Endothelial cell of umbilical vein (primary cell): ENCODE measurements at regions of chr4 and their contacts with region 1.

Region 1: GRCh38 chr4:25884031-25884782 is 21.4 kb upstream of the SEL1L3 start:
- DNase-seq: peak; percentile 84
- H3K4me3 ChIP-seq: no peak overlapping the region
- H3K27ac ChIP-seq: peak overlapping the region; percentile 57
- H3K4me1 ChIP-seq: peaks cover 15% of the 10 kb centered on the region
- H3K27me3 ChIP-seq: no peaks in the 10 kb centered on the region
- CTCF ChIP-seq: no peak
- POLR2A ChIP-seq: no peak

Region 2: GRCh38 chr4:25867781-25868294 is 16.4 kb before region 1 on chr4:
- CTCF ChIA-PET with region 1: interaction called, 5 read pairs
- POLR2A ChIA-PET with region 1: no interaction called
- dilution Hi-C with region 1: no loop called
- intact Hi-C with region 1: loop called (anchors 1 kb)
- DNase-seq: peak; percentile 84
- H3K4me3 ChIP-seq: no peak overlapping the region
- H3K27ac ChIP-seq: no peak overlapping the region
- H3K4me1 ChIP-seq: peaks cover 20% of the 10 kb centered on the region
- H3K27me3 ChIP-seq: no peaks in the 10 kb centered on the region
- CTCF ChIP-seq: no peak
- POLR2A ChIP-seq: no peak

Region 3: GRCh38 chr4:26267087-26267486 is 382.9 kb after region 1 on chr4:
- CTCF ChIA-PET with region 1: no interaction called
- POLR2A ChIA-PET with region 1: no interaction called
- dilution Hi-C with region 1: no loop called
- intact Hi-C with region 1: no loop called
- DNase-seq: no peak
- H3K4me3 ChIP-seq: no peak overlapping the region
- H3K27ac ChIP-seq: no peak overlapping the region
- H3K4me1 ChIP-seq: no peaks in the 10 kb centered on the region
- H3K27me3 ChIP-seq: no peaks in the 10 kb centered on the region
- CTCF ChIP-seq: no peak
- POLR2A ChIP-seq: no peak